ENCODE measurements at regions of chr14 and their contacts with region 1.

Region 1: GRCh38 chr14:50383618-50384225 is 13.0 kb downstream of the CDKL1 start:
- DNase-seq: no peak
- ATAC-seq: no peak
- H3K4me3 Mint-ChIP-seq: no peak overlapping the region
- H3K27ac Mint-ChIP-seq: no peak overlapping the region
- H3K4me1 Mint-ChIP-seq: peaks cover 4% of the 10 kb centered on the region
- H3K27me3 Mint-ChIP-seq: no peaks in the 10 kb centered on the region
- CTCF ChIP-seq: no peak

Region 2: GRCh38 chr14:50396631-50397390 is 13.1 kb after region 1 on chr14 and contains the start of gene CDKL1:
- CTCF ChIA-PET with region 1: no interaction called
- POLR2A ChIA-PET with region 1: interaction called, 10 read pairs
- DNase-seq: peak; percentile 76
- ATAC-seq: peak; percentile 76
- H3K4me3 Mint-ChIP-seq: peak within 1 kb of the TSS; percentile 81
- H3K27ac Mint-ChIP-seq: no peak within 1 kb of the TSS
- H3K4me1 Mint-ChIP-seq: peaks cover 26% of the 10 kb centered on the region
- H3K27me3 Mint-ChIP-seq: peaks cover 32% of the 10 kb centered on the region
- CTCF ChIP-seq: no peak
- total RNA-seq, gene CDKL1: 2.0 to 3.6 TPM (median 2.0 TPM) in 3 replicates

Region 3: GRCh38 chr14:50432131-50432530 is 48.4 kb after region 1 on chr14:
- CTCF ChIA-PET with region 1: no interaction called
- POLR2A ChIA-PET with region 1: no interaction called
- DNase-seq: no peak
- ATAC-seq: no peak
- H3K4me3 Mint-ChIP-seq: no peak overlapping the region
- H3K27ac Mint-ChIP-seq: no peak overlapping the region
- H3K4me1 Mint-ChIP-seq: no peaks in the 10 kb centered on the region
- H3K27me3 Mint-ChIP-seq: no peaks in the 10 kb centered on the region
- CTCF ChIP-seq: no peak

Measured in WTC11 (cell line).